Body of pancreas (tissue), 4 donors: ENCODE measurements at regions of chr16 and their contacts with region 1.

Region 1: GRCh38 chr16:23434380-23434779 is 18.6 kb downstream of the COG7 start:
- DNase-seq: peak; percentile 22 to 39 (median 26)
- ATAC-seq: peak; percentile 66
- H3K4me3 ChIP-seq: no peak overlapping the region
- H3K27ac ChIP-seq: no peak overlapping the region
- H3K4me1 ChIP-seq: peaks cover 18% of the 10 kb centered on the region
- H3K27me3 ChIP-seq: no peaks in the 10 kb centered on the region
- CTCF ChIP-seq: peak; percentile 68 to 94 (median 91)
- POLR2A ChIP-seq: no peak

Region 2: DNA sequence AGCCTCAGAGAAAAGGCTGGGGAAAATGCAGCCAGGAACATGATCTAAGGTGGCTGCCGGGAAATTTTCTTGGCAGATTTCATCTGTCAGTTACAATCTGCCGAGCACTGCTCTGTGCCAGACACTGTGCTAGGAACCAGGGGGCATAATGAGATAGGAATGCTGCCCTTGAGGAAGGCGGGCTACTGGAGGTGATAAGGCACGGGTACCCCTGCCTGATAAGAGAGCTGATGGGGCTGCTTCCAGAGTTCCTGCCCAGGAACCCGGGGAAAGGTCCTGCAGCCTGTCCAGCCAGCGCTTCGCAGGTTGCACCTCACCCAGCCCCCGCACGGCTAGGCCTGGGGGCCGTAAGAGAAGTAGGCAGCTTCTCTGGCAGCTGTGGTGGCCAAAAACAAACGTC is 248.7 kb before region 1 on chr16:
- intact Hi-C with region 1: loop called (anchors 5 kb)
- DNase-seq: peak; percentile 24 to 66 (median 46)
- ATAC-seq: peak; percentile 22
- H3K4me3 ChIP-seq: no peak overlapping the region
- H3K27ac ChIP-seq: peak overlapping the region in 2 of 4 donors; percentile 35 to 62
- H3K4me1 ChIP-seq: peaks cover 32% of the 10 kb centered on the region
- H3K27me3 ChIP-seq: peaks cover 0 to 12% of the 10 kb centered on the region in 2 donors
- CTCF ChIP-seq: no peak
- POLR2A ChIP-seq: no peak